AG04450 (cell line): ENCODE measurements at regions of chr2 and their contacts with region 1.

Region 1: DNA sequence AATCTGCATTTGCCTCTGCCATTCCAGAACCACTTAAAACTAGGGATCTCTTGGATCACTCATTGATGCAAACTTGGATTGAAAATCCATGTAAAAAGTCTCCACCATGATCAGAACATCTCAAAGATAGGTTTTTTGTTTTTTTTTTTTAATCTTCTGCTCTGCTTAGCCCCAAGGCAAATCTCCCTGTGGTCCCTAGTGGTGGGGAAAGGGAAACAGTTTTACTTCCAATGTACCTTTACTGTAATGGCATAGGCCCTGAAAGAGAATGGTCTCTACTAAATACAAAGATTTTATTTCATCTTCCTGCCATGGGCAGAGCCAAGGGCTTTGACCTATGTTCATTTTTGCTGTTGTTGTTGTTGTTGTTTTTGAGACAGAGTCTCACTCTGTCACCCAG is 78.4 kb downstream of the KANSL1L start:
- DNase-seq: no peak
- H3K4me3 ChIP-seq: no peak overlapping the region
- H3K27ac ChIP-seq: no peak overlapping the region
- H3K27me3 ChIP-seq: no peaks in the 10 kb centered on the region
- CTCF ChIP-seq: no peak

Region 2: DNA sequence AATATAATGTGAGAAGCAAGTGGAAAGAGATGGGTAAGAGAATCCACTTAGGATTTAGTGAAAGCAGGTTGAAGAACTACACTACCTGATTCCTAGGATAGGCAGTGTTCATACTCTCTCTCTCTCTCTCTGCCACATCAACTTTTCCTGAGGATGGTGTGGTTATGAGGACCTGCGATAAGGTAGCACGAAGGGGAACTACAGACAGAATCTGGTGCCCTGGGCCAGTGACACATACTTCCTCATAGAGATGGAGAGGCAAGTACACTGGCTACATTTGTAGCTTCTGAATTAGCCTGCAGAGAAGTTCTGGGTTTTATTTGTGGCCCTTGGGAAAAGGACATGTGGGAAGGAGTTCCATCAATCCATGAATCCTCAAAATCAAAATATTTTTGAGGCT is 1641.7 kb before region 1 on chr2:
- CTCF ChIA-PET with region 1: no interaction called
- POLR2A ChIA-PET with region 1: no interaction called
- DNase-seq: no peak
- H3K4me3 ChIP-seq: no peak overlapping the region
- H3K27ac ChIP-seq: no peak overlapping the region
- H3K27me3 ChIP-seq: no peaks in the 10 kb centered on the region
- CTCF ChIP-seq: no peak

Region 3: DNA sequence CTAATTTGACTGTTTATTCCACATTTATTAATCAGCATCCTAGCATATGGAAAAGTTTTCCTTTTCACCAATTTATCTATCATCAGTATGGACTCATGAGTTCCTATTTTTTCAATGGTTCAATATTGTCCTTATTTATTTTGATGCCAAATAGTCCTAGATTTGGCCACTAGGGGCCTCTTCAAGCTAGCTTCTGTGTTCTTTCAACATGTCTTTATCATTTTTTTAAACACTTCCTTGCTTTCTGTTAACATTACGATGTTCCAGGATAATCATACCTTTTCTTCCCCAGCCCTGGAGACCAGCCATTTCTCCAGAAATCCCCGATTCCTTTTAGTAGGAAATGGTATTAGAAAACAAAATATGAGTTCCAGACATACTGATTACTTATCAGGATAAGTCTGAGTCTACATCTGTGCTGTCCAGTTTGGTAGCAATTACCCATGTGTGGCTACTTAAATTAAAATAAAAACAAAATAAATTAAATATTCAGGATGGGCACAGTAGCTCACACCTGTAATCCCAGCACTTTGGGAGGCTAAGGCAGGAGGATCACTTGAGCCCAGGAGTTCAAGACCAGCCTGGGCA is 19.8 kb before region 1 on chr2:
- CTCF ChIA-PET with region 1: interaction called, 12 read pairs
- POLR2A ChIA-PET with region 1: no interaction called
- DNase-seq: peak; percentile 15
- H3K4me3 ChIP-seq: no peak overlapping the region
- H3K27ac ChIP-seq: no peak overlapping the region
- H3K27me3 ChIP-seq: no peaks in the 10 kb centered on the region
- CTCF ChIP-seq: peak; percentile 79